IMR-90 (cell line): ENCODE measurements at regions of chr3 and their contacts with region 1.

Region 1: DNA sequence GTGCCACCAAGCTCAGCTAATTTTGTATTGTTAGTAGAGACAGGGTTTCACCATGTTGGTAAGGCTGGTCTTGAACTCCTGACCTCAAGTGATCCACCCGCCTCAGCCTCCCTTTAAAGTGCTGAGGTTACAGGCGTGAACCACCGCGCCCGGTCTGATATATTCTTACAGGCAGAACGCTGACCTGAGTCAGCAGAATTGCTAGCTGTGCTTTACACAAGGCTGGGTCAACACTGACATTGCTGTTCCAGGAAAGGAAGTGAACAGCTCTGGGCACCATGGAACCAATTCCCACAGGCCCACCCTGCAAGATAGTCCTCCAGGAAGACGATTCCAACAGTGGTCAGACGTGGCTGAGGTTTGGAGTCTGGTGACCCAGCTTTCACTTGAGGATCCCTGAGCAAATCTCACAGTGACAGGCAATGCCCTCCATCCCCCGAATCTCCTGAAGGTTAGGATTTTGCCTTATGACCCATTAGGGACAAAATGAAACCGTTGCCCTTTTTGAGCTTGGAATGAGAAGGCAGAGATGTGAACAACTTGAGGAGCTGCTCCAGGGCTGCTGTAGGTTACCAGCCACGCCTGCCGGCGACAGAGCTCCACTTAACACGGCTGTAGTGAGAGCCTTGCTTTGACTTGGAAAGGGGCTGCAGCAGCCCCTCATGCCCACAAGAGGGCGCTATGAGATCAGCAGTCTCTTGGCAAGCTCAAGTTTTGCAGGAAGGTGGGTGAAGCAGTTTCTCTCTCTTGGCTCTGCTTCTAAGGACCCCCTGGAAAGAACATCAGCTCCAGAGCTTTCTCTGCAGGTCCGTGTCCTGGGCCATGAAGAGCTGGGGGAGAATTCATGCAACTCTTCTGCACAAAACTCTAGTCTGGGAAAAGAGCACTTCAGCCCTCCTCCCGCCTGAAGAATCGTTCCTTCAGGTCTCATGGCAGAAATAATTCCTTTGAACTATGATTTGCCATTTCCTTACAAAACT is 74.1 kb downstream of the SENP2 start:
- DNase-seq: peak; percentile 81
- ATAC-seq: peak; percentile 9
- H3K4me3 ChIP-seq: no peak overlapping the region
- H3K27ac ChIP-seq: peak overlapping the region; percentile 11; the same call in 1 of the 2 replicates
- H3K4me1 ChIP-seq: peaks cover 31% of the 10 kb centered on the region
- H3K27me3 ChIP-seq: no peaks in the 10 kb centered on the region
- CTCF ChIP-seq: peak; percentile 93
- POLR2A ChIP-seq: no peak
- RAD21 ChIP-seq: peak; percentile 91

Region 2: DNA sequence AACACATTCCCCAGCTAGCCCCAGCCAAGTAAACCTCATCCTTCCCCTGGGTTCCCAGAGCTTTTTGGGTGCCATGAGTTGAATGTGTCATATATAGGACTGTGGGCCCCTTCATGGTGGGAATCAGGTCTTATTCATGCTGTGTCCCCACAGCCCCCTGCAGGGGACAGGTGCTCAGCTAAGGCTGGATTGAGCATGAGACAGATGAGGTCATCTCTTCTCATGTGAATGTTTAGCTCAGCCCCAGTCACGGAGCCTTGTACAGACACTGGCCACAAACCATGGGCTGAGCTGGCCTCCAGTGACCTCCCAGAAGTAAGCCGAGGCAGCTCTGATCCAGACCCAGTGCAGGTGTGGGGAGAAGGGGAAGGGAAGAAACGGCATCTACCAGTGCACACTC is 578.1 kb before region 1 on chr3:
- CTCF ChIA-PET with region 1: no interaction called
- POLR2A ChIA-PET with region 1: no interaction called
- dilution Hi-C with region 1: no loop called
- in situ Hi-C with region 1: no loop called
- intact Hi-C with region 1: no loop called
- DNase-seq: peak; percentile 26
- ATAC-seq: no peak
- H3K4me3 ChIP-seq: no peak overlapping the region
- H3K27ac ChIP-seq: no peak overlapping the region
- H3K4me1 ChIP-seq: no peaks in the 10 kb centered on the region; the same call in 1 of the 2 replicates
- H3K27me3 ChIP-seq: no peaks in the 10 kb centered on the region
- CTCF ChIP-seq: no peak
- POLR2A ChIP-seq: no peak
- RAD21 ChIP-seq: no peak

Region 3: DNA sequence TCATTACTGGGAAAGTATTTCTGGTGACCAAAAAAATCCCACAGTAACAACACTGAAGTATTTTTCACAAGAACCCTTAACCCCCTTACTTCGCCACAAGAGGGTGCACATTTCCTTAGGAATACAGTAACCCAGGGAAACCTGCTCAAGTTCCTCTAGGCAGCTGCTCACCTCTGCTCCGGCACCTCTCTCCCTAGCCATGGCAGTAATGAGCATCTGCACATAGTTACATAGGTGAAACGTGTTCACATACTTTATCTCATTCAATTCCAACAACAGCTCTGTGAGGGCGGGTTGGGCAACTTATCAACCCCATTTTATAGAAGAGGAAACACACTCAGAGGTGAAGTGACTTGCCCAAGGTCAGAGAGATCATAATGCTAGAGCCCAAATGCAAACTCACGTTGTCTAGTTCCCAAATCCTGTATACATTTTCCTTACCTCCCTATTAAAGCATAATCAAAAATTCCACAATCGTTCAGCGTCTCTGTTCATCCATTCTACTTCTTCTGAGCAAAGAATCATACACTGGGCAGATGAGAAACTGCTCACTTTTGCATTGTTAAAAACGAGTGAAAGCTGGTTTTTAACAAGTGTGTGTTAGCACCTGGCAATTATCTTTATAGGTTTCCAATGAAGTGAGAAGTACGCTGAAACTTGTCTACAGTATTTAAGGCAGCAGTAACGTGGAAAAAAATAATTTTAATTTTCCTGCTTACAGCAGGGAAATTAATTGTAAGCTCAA is 73.9 kb after region 1 on chr3:
- CTCF ChIA-PET with region 1: interaction called, 9 read pairs
- POLR2A ChIA-PET with region 1: no interaction called
- dilution Hi-C with region 1: no loop called
- in situ Hi-C with region 1: no loop called
- intact Hi-C with region 1: loop called (anchors 5 kb)
- DNase-seq: peak; percentile 89
- ATAC-seq: peak; percentile 31
- H3K4me3 ChIP-seq: no peak overlapping the region
- H3K27ac ChIP-seq: no peak overlapping the region
- H3K4me1 ChIP-seq: peaks cover 34% of the 10 kb centered on the region
- H3K27me3 ChIP-seq: no peaks in the 10 kb centered on the region
- CTCF ChIP-seq: peak; percentile 79
- POLR2A ChIP-seq: no peak
- RAD21 ChIP-seq: peak; percentile 84

Region 4: GRCh38 chr3:185900226-185900625 is 240.0 kb after region 1 on chr3:
- CTCF ChIA-PET with region 1: interaction called, 4 read pairs
- POLR2A ChIA-PET with region 1: no interaction called
- dilution Hi-C with region 1: no loop called
- in situ Hi-C with region 1: loop called (anchors 25 kb)
- intact Hi-C with region 1: no loop called
- DNase-seq: peak; percentile 95
- ATAC-seq: peak; percentile 100
- H3K4me3 ChIP-seq: no peak overlapping the region
- H3K27ac ChIP-seq: no peak overlapping the region
- H3K4me1 ChIP-seq: no peaks in the 10 kb centered on the region
- H3K27me3 ChIP-seq: peaks cover 2% of the 10 kb centered on the region; the same call in 1 of the 2 replicates
- CTCF ChIP-seq: no peak
- POLR2A ChIP-seq: no peak
- RAD21 ChIP-seq: no peak; the same call in 1 of the 2 replicates

Region 5: GRCh38 chr3:185937689-185938463 is 277.6 kb after region 1 on chr3 and contains the start of gene TRA2B:
- CTCF ChIA-PET with region 1: interaction called, 3 read pairs
- POLR2A ChIA-PET with region 1: no interaction called
- dilution Hi-C with region 1: no loop called
- in situ Hi-C with region 1: no loop called
- intact Hi-C with region 1: loop called (anchors 2 kb)
- DNase-seq: peak; percentile 97
- ATAC-seq: peak; percentile 90
- H3K4me3 ChIP-seq: peak within 1 kb of the TSS; percentile 75
- H3K27ac ChIP-seq: peak within 1 kb of the TSS; percentile 95
- H3K4me1 ChIP-seq: no peaks in the 10 kb centered on the region
- H3K27me3 ChIP-seq: no peaks in the 10 kb centered on the region
- CTCF ChIP-seq: peak; percentile 34
- POLR2A ChIP-seq: peak; percentile 99
- RAD21 ChIP-seq: no peak
- total RNA-seq, gene TRA2B: 208 and 328 TPM in 2 replicates

Region 6: GRCh38 chr3:186057594-186057993 is 397.4 kb after region 1 on chr3:
- CTCF ChIA-PET with region 1: no interaction called
- POLR2A ChIA-PET with region 1: no interaction called
- dilution Hi-C with region 1: no loop called
- in situ Hi-C with region 1: no loop called
- intact Hi-C with region 1: loop called (anchors 10 kb)
- DNase-seq: peak; percentile 97
- ATAC-seq: peak; percentile 92
- H3K4me3 ChIP-seq: no peak overlapping the region
- H3K27ac ChIP-seq: peak overlapping the region; percentile 21; the same call in 1 of the 2 replicates
- H3K4me1 ChIP-seq: peaks cover 8% of the 10 kb centered on the region; the same call in 1 of the 2 replicates
- H3K27me3 ChIP-seq: no peaks in the 10 kb centered on the region
- CTCF ChIP-seq: no peak
- POLR2A ChIP-seq: no peak
- RAD21 ChIP-seq: peak; percentile 16; the same call in 1 of the 2 replicates

Region 7: DNA sequence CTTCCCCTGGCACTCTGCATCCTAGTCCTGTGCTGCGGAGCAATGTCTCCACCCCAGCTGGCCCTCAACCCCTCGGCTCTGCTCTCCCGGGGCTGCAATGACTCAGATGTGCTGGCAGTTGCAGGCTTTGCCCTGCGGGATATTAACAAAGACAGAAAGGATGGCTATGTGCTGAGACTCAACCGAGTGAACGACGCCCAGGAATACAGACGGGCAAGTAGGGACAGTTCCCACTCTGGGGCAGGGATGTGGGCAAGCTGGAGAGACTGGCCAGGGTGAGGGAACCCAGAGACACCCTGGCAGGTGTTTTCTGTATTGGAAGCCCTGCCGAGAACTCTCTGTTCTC is 980.2 kb after region 1 on chr3:
- CTCF ChIA-PET with region 1: no interaction called
- POLR2A ChIA-PET with region 1: no interaction called
- dilution Hi-C with region 1: no loop called
- in situ Hi-C with region 1: no loop called
- intact Hi-C with region 1: no loop called
- DNase-seq: no peak
- ATAC-seq: peak; percentile 46; the same call in 1 of the 2 replicates
- H3K4me3 ChIP-seq: no peak overlapping the region
- H3K27ac ChIP-seq: no peak overlapping the region
- H3K4me1 ChIP-seq: no peaks in the 10 kb centered on the region
- H3K27me3 ChIP-seq: peaks cover 23% of the 10 kb centered on the region
- CTCF ChIP-seq: no peak
- POLR2A ChIP-seq: no peak
- RAD21 ChIP-seq: no peak